ENCODE measurements at regions of chr18 and their contacts with region 1.

Region 1: GRCh38 chr18:36284671-36285295 is 12.7 kb upstream of the FHOD3 start:
- DNase-seq: peak; percentile 52
- H3K4me3 ChIP-seq: no peak overlapping the region
- H3K27ac ChIP-seq: no peak overlapping the region
- H3K4me1 ChIP-seq: no peaks in the 10 kb centered on the region
- CTCF ChIP-seq: peak; percentile 81

Region 2: DNA sequence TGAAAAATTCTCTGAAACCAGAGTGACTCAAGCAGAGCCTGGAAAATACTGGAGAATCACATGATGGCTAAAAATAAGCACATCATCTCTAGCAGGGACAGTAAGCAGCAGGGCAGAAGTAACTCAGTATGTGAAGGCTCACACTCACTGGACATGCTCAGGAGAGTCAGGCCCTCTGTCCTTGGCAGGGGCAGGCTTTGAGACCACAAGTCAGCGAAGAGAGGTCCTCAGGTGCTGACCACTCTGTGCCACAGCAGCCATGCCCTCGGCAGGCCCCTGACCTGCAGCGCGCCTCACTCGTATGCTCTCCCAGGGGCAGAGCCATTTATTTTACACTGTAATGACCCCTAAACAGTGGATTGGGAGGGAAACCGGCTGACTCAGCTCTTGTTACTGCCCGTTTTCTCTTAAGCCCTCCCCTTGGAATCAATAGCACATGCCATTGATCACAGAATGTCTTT is 1166.8 kb before region 1 on chr18:
- CTCF ChIA-PET with region 1: no interaction called
- POLR2A ChIA-PET with region 1: no interaction called
- intact Hi-C with region 1: no loop called
- DNase-seq: no peak
- H3K4me3 ChIP-seq: no peak overlapping the region
- H3K27ac ChIP-seq: no peak overlapping the region
- H3K4me1 ChIP-seq: peaks cover 5% of the 10 kb centered on the region
- CTCF ChIP-seq: no peak

Region 3: DNA sequence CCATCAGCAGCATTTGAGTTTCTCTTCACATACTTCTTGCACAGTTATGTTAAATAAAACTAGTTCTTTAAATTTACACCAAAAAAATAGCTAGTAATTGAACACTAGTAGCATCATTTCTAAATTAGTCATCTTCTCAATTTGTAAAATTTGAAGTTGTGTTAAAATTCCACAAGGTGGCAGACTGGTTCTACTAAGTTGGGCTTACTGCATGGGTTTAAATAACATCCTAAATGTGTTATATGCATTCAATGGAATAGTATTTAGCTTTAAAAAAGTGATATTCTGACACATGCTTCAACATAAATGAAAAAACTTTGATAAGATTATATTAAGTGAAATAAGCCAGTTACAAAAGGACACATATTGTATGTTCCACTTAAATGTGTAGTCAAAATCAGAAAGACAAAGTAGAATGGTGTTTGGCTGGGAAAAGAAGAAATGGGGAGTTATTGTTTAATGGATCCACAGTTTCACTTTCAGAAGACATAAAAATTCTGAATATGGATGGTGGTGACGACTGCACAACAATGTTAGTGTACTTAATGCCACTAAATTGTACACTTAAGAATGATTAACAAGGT is 188.8 kb before region 1 on chr18:
- CTCF ChIA-PET with region 1: no interaction called
- POLR2A ChIA-PET with region 1: no interaction called
- intact Hi-C with region 1: loop called (anchors 1 kb)
- DNase-seq: peak; percentile 58
- H3K4me3 ChIP-seq: no peak overlapping the region
- H3K27ac ChIP-seq: no peak overlapping the region
- H3K4me1 ChIP-seq: no peaks in the 10 kb centered on the region
- CTCF ChIP-seq: peak; percentile 78

Measured in OCI-LY7 (cell line).